ENCODE measurements at regions of chrX and their contacts with region 1.

Region 1: GRCh38 chrX:134338527-134338926 is 101.5 kb downstream of the CCDC160 start:
- DNase-seq: no peak
- H3K4me3 ChIP-seq: no peak overlapping the region
- H3K27ac ChIP-seq: no peak overlapping the region
- H3K4me1 ChIP-seq: no peaks in the 10 kb centered on the region
- H3K27me3 ChIP-seq: no peaks in the 10 kb centered on the region
- CTCF ChIP-seq: no peak
- EP300 ChIP-seq: no peak
- POLR2A ChIP-seq: no peak

Region 2: DNA sequence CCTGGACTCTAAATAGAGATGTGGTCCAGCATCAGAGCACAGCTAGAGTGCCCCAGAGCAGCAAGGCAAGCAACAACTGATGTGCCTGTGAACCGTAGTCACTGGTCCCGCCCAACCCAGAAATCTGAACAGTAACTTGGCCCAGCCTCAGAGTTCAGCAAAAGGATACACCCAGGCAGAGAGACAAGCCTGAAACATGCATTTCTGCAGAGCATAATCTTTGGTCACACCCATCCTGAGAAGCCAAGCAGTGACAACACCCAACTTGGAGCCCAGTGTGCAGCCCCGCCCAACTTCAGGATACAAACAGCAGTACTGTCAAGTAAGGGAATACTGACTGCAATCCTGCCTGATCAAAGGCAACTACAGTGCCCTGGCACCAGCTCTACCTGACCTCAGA is 22.7 kb before region 1 on chrX:
- in situ Hi-C with region 1: no loop called
- intact Hi-C with region 1: loop called (anchors 2 kb)
- DNase-seq: peak; percentile 12
- H3K4me3 ChIP-seq: no peak overlapping the region
- H3K27ac ChIP-seq: no peak overlapping the region
- H3K4me1 ChIP-seq: no peaks in the 10 kb centered on the region
- H3K27me3 ChIP-seq: no peaks in the 10 kb centered on the region
- CTCF ChIP-seq: no peak
- EP300 ChIP-seq: no peak
- POLR2A ChIP-seq: no peak

Measured in transverse colon (tissue), 4 donors.